Ovary (tissue), 10 donors: ENCODE measurements at regions of chr15 and their contacts with region 1.

Region 1: DNA sequence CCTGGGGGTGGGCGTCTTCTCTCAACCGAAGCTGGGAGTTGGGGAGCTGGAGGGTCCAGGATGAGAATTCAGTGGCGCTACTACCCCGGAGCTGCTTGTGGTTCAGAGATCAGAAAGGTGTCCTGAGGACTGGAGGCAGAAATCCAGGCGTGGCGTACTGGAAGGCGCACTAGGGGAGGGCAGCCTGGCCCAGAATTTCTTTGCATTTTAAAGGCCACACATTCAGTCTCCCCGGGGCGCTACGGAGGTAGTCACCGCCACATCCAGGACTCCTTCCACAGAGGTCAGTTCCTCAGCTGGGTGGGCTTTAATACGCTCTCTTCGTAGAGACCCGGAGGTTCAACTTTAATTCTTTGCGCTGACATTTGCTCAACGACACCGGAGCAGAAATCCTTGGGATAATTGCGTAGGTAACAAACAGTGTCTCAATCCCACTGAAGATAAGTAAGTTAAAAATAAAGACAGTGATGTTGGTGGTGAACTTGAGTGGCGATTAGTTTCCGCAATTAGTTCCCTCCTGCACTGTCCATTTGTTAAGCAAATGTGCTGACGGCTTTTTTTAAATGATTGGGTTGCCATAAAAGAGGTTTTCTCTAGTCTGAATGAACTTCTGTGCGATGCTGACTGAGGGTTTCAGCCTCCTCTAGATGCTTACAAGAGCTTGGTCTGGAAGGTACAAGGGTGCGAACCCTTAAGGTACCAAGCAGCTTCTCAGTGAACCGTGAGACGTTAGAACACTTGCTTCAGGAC is 537 bp downstream of the MCTP2 start:
- DNase-seq: no peak
- H3K4me3 ChIP-seq: peak overlapping the region; percentile 55
- H3K27ac ChIP-seq: no peak overlapping the region
- H3K4me1 ChIP-seq: no peaks in the 10 kb centered on the region
- H3K27me3 ChIP-seq: no peaks in the 10 kb centered on the region
- CTCF ChIP-seq: no peak
- EP300 ChIP-seq: no peak
- POLR2A ChIP-seq: no peak

Region 2: DNA sequence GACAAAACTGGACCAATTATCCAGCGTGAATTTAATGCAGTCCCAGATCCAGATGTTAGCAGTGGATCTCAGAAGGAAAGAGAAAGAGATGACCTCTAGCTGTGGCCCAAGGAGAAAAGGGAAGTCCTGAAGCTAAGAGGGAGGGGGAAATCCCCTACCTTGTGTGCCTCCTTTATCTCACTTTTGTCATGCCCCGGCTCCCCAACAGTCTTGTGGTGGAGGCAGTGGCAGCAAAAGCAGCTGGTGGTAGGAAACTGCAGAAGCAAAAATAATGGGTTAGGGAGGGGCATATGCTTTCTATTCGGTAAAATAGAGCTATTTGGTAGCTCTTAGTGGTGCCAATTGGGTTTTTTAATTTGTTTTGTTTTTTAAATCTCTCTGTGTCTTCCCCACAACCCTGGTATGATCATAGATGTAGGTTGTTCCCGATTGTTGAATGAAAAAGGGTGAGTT is 55.9 kb after region 1 on chr15:
- intact Hi-C with region 1: loop called in 1 of 4 experiments (anchors 2 kb)
- DNase-seq: no peak
- H3K4me3 ChIP-seq: no peak overlapping the region
- H3K27ac ChIP-seq: no peak overlapping the region
- H3K4me1 ChIP-seq: no peaks in the 10 kb centered on the region
- H3K27me3 ChIP-seq: no peaks in the 10 kb centered on the region
- CTCF ChIP-seq: no peak
- EP300 ChIP-seq: no peak
- POLR2A ChIP-seq: no peak

Region 3: DNA sequence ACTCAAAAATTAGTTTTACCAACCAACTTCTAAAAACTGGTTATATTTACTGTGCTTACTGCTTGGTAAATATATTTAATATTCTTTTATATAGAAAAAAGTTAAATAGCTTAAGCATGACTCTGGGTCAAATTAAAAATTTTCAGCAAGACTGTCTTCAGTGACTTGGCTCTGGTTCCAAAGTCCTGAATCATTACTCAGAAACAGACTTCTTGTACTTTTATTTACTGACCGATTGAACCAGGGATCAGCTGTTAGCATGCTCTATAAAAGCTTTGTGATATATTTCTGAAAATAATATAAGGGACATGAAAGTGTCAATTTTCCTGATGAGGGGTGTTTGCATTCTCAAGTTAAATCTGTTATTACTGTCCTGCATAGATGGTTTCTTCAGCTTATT is 163.7 kb after region 1 on chr15:
- intact Hi-C with region 1: no loop called
- DNase-seq: no peak
- H3K4me3 ChIP-seq: no peak overlapping the region
- H3K27ac ChIP-seq: no peak overlapping the region
- H3K4me1 ChIP-seq: no peaks in the 10 kb centered on the region
- H3K27me3 ChIP-seq: no peaks in the 10 kb centered on the region
- CTCF ChIP-seq: no peak
- EP300 ChIP-seq: no peak
- POLR2A ChIP-seq: no peak